Vagina (tissue), 2 donors: ENCODE measurements at regions of chr1 and their contacts with region 1.

Region 1: GRCh38 chr1:33460947-33461629 is 11.4 kb upstream of the ZSCAN20 start:
- DNase-seq: peak in 1 of 2 donors; percentile 22
- H3K4me3 ChIP-seq: no peak overlapping the region
- H3K27ac ChIP-seq: peak overlapping the region; percentile 13
- H3K4me1 ChIP-seq: peaks cover 8% of the 10 kb centered on the region
- H3K27me3 ChIP-seq: no peaks in the 10 kb centered on the region
- CTCF ChIP-seq: no peak
- POLR2A ChIP-seq: no peak

Region 2: DNA sequence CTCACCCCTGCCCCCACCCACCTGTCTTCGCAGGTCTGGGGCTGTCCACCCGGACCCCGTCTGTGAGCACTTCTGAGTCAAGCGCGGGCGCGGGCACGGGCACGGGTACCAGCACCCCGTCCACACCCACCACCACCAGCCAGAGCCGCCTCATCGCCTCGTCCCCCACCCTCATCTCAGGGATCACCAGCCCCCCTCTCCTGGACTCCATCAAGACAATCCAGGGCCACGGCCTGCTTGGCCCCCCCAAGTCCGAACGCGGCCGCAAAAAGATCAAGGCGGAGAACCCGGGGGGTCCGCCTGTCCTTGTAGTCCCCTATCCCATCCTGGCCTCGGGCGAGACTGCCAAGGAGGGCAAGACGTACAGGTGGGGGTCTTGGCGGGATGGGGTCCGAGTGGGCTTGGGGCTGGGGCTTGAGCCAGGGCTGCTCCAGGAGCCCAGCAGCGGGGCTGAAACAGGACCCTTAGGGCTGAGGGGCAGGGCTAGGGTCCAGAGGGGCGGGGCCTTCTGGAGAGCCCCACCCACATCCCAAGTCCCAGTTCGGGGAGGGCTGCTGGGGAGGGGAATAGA is 180.9 kb before region 1 on chr1:
- intact Hi-C with region 1: loop called (anchors 10 kb)
- DNase-seq: no peak
- H3K4me3 ChIP-seq: no peak overlapping the region
- H3K27ac ChIP-seq: no peak overlapping the region
- H3K4me1 ChIP-seq: no peaks in the 10 kb centered on the region
- H3K27me3 ChIP-seq: no peaks in the 10 kb centered on the region
- CTCF ChIP-seq: no peak
- POLR2A ChIP-seq: no peak